Cardiac septum (tissue), 1 donor: ENCODE measurements at regions of chr2 and their contacts with region 1.

Region 1: DNA sequence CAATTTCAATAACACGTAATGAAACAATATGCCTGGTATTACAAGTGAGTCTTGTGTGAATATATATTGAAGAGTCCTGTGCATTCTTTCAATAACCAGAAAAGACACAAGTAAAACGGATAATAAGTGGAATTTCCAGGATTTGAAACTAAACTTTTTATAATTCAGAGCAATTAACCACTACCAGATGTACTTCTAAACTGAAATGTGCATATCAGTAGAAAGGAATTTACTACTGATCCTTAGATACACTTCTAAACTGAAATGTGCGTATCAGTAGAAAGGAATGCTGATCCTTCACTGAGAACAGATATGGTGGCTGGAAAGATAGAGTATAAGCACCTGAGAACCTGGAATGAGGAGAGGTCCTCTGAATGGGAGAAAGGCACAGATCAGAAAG is 470.9 kb upstream of the SPHKAP start:
- DNase-seq: no peak

Region 2: GRCh38 chr2:228318218-228318617 is 334.1 kb before region 1 on chr2:
- intact Hi-C with region 1: loop called (anchors 5 kb)
- DNase-seq: no peak

Region 3: GRCh38 chr2:228348516-228349064 is 303.8 kb before region 1 on chr2:
- intact Hi-C with region 1: loop called (anchors 5 kb)
- DNase-seq: no peak

Region 4: GRCh38 chr2:228681426-228681825 is 29.1 kb after region 1 on chr2:
- intact Hi-C with region 1: no loop called
- DNase-seq: no peak